ENCODE measurements at regions of chr7 and their contacts with region 1.

Region 1: DNA sequence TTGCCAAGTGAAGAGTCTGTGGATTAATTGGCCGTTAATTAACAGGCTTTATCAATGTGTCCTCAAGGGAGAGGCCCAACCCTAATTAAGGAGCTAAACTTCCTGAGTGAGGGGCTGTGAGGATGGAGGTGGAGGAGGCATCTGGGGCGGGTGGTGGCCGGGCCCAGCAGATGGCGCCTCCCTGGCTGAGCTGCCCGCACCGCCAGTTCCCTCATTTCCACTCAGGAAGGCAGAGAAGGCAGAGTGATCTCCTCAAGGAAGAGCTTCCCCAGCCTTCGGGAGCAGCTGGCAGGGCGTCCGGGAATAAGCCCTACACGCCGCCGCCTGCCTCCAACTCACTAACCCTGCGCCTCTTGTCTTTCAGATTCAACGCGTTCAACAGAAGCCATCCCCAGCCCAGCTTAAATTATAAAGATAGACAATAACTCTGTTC is 112.2 kb downstream of the CYTH3 start:
- DNase-seq: peak; percentile 96
- H3K4me3 ChIP-seq: no peak overlapping the region; a peak in 1 of 4 replicates
- H3K27ac ChIP-seq: peak overlapping the region; percentile 24 to 48; a peak in 3 of 4 replicates
- H3K4me1 ChIP-seq: peaks cover 0 to 30% of the 10 kb centered on the region in 2 experiments; a peak in 1 of 4 replicates
- H3K27me3 ChIP-seq: no peaks in the 10 kb centered on the region
- CTCF ChIP-seq: peak; percentile 92
- EP300 ChIP-seq: no peak
- RAD21 ChIP-seq: peak; percentile 82

Region 2: GRCh38 chr7:5320802-5321396 is 839.3 kb before region 1 on chr7:
- CTCF ChIA-PET with region 1: no interaction called
- POLR2A ChIA-PET with region 1: no interaction called
- DNase-seq: no peak
- H3K4me3 ChIP-seq: no peak overlapping the region
- H3K27ac ChIP-seq: no peak overlapping the region
- H3K4me1 ChIP-seq: no peaks in the 10 kb centered on the region
- H3K27me3 ChIP-seq: no peaks in the 10 kb centered on the region
- CTCF ChIP-seq: no peak
- EP300 ChIP-seq: no peak
- RAD21 ChIP-seq: no peak

Region 3: DNA sequence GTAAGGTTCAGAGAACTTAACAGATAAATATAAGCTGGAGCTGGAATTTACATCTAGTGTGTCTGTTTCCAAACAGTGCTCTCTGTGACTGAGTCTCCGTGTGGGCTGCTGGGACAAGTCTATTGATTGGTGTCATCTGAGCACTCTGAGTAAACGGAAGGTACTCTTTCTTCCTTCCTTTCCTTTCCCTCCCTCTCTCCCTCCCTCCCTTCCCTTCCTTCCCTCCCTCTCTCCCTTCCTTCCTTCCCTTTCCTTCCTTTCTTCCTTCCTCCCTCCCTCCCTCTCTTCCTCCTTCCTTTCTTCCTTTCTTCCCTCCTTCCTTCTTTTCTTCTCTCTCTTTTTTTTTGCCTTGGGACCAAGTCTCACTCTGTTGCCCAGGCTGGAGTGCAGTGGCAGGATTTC is 67.3 kb before region 1 on chr7:
- CTCF ChIA-PET with region 1: no interaction called
- POLR2A ChIA-PET with region 1: no interaction called
- DNase-seq: no peak
- H3K4me3 ChIP-seq: no peak overlapping the region
- H3K27ac ChIP-seq: no peak overlapping the region
- H3K4me1 ChIP-seq: no peaks in the 10 kb centered on the region
- H3K27me3 ChIP-seq: peaks cover 12% of the 10 kb centered on the region
- CTCF ChIP-seq: no peak
- EP300 ChIP-seq: no peak
- RAD21 ChIP-seq: no peak

Region 4: GRCh38 chr7:6133249-6133648 is 27.0 kb before region 1 on chr7:
- CTCF ChIA-PET with region 1: interaction called, 12 read pairs
- POLR2A ChIA-PET with region 1: no interaction called
- DNase-seq: no peak
- H3K4me3 ChIP-seq: no peak overlapping the region
- H3K27ac ChIP-seq: no peak overlapping the region
- H3K4me1 ChIP-seq: no peaks in the 10 kb centered on the region
- H3K27me3 ChIP-seq: no peaks in the 10 kb centered on the region
- CTCF ChIP-seq: no peak
- EP300 ChIP-seq: no peak
- RAD21 ChIP-seq: no peak

Region 5: GRCh38 chr7:6148724-6149360 is 11.4 kb before region 1 on chr7:
- CTCF ChIA-PET with region 1: interaction called, 31 read pairs
- POLR2A ChIA-PET with region 1: interaction called, 3 read pairs
- DNase-seq: no peak
- H3K4me3 ChIP-seq: no peak overlapping the region
- H3K27ac ChIP-seq: no peak overlapping the region
- H3K4me1 ChIP-seq: no peaks in the 10 kb centered on the region
- H3K27me3 ChIP-seq: no peaks in the 10 kb centered on the region
- CTCF ChIP-seq: no peak
- EP300 ChIP-seq: no peak
- RAD21 ChIP-seq: no peak

Region 6: GRCh38 chr7:6260291-6261187 is 100.3 kb after region 1 on chr7:
- CTCF ChIA-PET with region 1: interaction called, 11 read pairs
- POLR2A ChIA-PET with region 1: no interaction called
- DNase-seq: no peak
- H3K4me3 ChIP-seq: no peak overlapping the region
- H3K27ac ChIP-seq: peak overlapping the region; percentile 64 to 92
- H3K4me1 ChIP-seq: peaks cover 29 to 53% of the 10 kb centered on the region in 2 experiments
- H3K27me3 ChIP-seq: no peaks in the 10 kb centered on the region
- CTCF ChIP-seq: no peak
- EP300 ChIP-seq: no peak
- RAD21 ChIP-seq: no peak

Region 7: DNA sequence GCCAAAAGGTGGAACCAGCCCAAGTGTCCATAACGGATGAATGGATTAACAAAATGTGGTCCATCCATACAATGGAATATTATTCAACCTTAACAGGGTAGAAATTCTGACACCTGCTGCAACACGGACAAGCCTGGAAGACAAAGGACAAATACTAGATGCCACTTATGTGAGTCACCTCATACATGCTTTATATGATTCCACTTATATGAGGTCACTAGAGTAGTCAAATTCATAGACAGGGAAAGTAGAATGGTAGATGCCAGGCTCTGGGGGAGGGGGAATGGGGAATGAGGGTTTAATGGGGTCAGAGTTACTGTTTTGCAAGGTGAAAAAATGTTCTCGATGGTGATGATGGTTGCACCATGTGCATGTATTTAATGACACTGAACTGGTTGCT is 146.3 kb after region 1 on chr7:
- CTCF ChIA-PET with region 1: interaction called, 10 read pairs
- POLR2A ChIA-PET with region 1: no interaction called
- DNase-seq: no peak
- H3K4me3 ChIP-seq: no peak overlapping the region
- H3K27ac ChIP-seq: peak overlapping the region in 1 of 2 experiments; percentile 37; a peak in 2 of 4 replicates
- H3K4me1 ChIP-seq: peaks cover 0 to 9% of the 10 kb centered on the region in 2 experiments; a peak in 1 of 4 replicates
- H3K27me3 ChIP-seq: no peaks in the 10 kb centered on the region
- CTCF ChIP-seq: no peak
- EP300 ChIP-seq: peak in 1 of 2 experiments; percentile 66; a peak in 1 of 4 replicates
- RAD21 ChIP-seq: no peak

Region 8: GRCh38 chr7:6323967-6324701 is 163.9 kb after region 1 on chr7:
- CTCF ChIA-PET with region 1: interaction called, 153 read pairs
- POLR2A ChIA-PET with region 1: interaction called, 3 read pairs
- DNase-seq: no peak
- H3K4me3 ChIP-seq: no peak overlapping the region
- H3K27ac ChIP-seq: no peak overlapping the region
- H3K4me1 ChIP-seq: no peaks in the 10 kb centered on the region
- H3K27me3 ChIP-seq: no peaks in the 10 kb centered on the region
- CTCF ChIP-seq: no peak
- EP300 ChIP-seq: no peak
- RAD21 ChIP-seq: no peak

Region 9: DNA sequence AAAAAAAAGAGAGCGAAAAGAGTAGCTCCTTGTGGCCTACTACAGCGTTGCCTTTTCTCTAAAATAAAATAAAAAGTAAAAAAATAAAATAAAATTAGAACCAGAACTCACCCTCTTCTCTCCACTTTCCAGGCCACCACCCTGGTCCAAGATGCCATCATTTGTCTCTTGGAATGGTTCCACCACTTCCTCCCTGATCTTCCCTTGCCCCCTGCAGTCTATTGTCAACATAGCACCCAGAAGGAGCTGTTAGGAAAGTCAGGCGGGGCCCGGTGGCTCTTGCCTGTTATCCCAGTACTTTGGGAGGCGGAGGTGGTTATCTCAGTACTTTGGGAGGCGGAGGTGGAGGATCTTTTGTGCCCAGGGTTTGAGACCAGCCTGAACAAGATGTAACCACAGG is 398.6 kb after region 1 on chr7:
- CTCF ChIA-PET with region 1: no interaction called
- POLR2A ChIA-PET with region 1: no interaction called
- DNase-seq: peak; percentile 88
- H3K4me3 ChIP-seq: no peak overlapping the region
- H3K27ac ChIP-seq: no peak overlapping the region
- H3K4me1 ChIP-seq: no peaks in the 10 kb centered on the region
- H3K27me3 ChIP-seq: peaks cover 2% of the 10 kb centered on the region; the same call in 1 of the 2 replicates
- CTCF ChIP-seq: peak; percentile 65
- EP300 ChIP-seq: no peak
- RAD21 ChIP-seq: peak; percentile 89